ENCODE measurements at regions of chr11 and their contacts with region 1.

Region 1: DNA sequence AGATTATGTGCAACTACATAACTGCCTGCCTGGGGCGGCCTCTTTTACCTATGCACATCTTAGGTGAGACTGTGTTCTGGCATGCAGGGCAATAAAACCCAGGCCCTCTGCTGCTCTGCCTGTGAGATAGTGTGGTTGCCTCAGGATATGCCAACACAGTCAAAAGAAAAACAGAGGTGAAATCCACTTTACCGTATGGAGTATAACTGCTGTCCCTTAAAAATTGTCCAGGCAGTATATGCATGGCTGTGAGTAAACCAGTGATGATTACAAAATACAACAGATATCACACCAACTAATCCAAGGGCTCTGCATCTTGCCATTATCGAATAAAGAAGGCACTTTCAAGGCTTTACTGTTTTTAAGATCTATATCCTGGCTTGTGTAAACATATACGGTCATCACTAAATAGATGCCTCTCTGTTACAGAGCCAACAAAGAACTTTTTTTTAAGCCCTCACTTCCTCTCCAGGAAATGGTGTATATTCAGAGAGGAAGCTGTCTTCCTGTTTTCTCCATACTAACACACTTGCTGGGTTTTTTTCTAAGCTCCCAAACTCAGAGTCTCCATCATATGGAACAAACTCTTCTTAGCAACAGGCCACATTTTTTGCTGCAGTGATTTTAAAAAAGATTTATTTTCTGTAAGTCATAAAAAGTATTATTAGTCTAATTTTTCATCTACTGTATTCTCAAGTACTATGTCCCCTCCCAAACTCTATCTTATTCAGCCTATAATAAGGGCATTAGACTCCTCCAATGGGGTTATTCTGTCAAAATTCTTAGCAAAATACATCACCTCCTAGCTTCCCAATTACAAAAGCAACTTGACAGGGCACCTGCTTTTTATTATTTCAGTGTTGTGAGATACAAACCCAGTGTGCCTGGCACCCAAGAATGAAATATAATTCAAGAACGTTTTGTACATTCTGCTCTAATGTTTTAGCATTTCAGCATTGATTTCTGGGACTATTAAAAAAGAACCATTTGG is 135.2 kb downstream of the MAML2 start:
- DNase-seq: peak; percentile 78
- H3K4me3 Mint-ChIP-seq: peak overlapping the region; percentile 74
- H3K27ac Mint-ChIP-seq: peak overlapping the region; percentile 93
- H3K4me1 Mint-ChIP-seq: peaks cover 71% of the 10 kb centered on the region
- H3K27me3 Mint-ChIP-seq: no peaks in the 10 kb centered on the region

Region 2: DNA sequence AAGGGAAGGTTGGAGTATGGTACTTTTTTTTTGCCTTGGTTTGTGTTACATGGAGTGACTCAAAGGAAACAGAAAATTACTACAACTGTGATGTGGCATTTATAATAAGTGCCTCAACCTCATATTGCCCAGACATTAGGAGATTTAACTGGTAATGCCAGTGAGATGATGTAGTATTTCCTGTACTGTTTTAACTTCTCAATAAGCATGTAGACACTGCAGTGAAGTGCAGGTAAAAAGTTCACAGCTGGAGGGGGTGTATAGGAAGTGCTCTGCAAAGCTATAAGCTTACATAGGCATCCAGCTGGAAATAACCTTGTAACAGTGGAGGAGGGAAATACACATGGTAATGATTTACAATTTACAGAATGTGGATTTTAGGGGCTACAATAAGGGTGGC is 145.6 kb before region 1 on chr11:
- intact Hi-C with region 1: loop called (anchors 2 kb)
- DNase-seq: peak; percentile 70
- H3K4me3 Mint-ChIP-seq: peak overlapping the region; percentile 11
- H3K27ac Mint-ChIP-seq: peak overlapping the region; percentile 86
- H3K4me1 Mint-ChIP-seq: peaks cover 43% of the 10 kb centered on the region
- H3K27me3 Mint-ChIP-seq: no peaks in the 10 kb centered on the region